PC-3 (cell line): ENCODE measurements at regions of chr20 and their contacts with region 1.

Region 1: DNA sequence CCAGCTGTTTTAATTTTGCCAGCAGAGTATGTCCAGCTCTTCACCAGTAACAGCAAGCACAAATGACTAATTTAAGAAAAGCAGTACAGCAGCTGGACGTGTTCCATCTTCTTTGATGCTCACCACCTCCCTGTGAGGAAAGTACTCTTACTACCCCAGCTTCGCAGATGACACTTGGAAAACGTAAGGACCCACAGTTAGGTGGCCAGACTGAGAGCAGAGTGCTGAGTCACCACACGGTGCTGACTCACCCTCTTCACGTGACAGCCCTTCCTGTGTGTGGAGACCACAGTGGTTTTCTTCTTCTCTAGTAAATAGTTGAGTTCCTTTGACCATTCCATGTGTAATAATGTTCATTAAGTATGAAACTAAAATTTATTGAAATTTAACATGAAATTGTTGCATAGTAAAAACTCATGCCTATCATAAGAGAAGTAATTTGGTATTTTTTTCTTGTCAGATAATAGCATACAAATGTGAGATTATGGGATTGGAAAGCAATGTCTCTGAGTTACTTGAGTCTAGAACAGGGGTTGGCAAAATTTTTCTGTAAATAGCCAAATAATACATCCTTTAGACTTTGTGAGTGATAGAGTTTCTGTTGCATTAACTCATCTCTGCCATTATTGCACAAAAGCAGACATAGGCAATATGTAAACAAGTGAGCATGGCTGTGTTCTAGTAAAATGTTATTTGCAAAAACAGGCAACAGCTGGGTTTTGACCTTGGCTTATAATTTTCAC is 76.6 kb downstream of the SLX4IP start:
- DNase-seq: peak; percentile 98
- ATAC-seq: peak; percentile 98
- H3K4me3 ChIP-seq: no peak overlapping the region
- H3K27ac ChIP-seq: peak overlapping the region; percentile 76
- H3K4me1 ChIP-seq: peaks cover 35% of the 10 kb centered on the region
- H3K27me3 ChIP-seq: no peaks in the 10 kb centered on the region
- CTCF ChIP-seq: no peak

Region 2: DNA sequence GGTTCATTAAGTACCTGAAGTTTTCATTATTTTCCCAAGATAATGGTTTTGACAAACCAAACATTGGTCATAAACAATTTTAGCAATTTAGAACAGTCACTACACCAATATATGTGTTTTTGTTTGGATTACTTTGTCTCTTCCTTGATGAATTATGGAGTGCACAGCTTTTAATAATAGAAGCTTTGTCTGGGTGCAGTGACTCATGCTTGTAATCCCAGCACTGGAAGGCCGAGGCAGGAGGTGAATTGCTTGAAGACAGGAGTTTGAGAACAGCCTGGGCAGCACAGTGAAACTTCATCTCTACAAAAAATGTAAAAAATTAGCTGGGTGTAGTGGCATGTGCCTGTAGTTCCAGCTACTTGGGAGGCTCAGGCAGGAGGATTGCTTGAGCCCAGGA is 566.3 kb before region 1 on chr20:
- CTCF ChIA-PET with region 1: no interaction called
- POLR2A ChIA-PET with region 1: no interaction called
- intact Hi-C with region 1: no loop called
- DNase-seq: peak; percentile 86
- ATAC-seq: peak; percentile 99
- H3K4me3 ChIP-seq: no peak overlapping the region
- H3K27ac ChIP-seq: peak overlapping the region; percentile 74
- H3K4me1 ChIP-seq: peaks cover 15% of the 10 kb centered on the region
- H3K27me3 ChIP-seq: no peaks in the 10 kb centered on the region
- CTCF ChIP-seq: no peak

Region 3: GRCh38 chr20:10469599-10469998 is 42.1 kb before region 1 on chr20:
- CTCF ChIA-PET with region 1: no interaction called
- POLR2A ChIA-PET with region 1: no interaction called
- intact Hi-C with region 1: loop called (anchors 5 kb)
- DNase-seq: peak; percentile 87
- ATAC-seq: peak; percentile 79
- H3K4me3 ChIP-seq: no peak overlapping the region
- H3K27ac ChIP-seq: peak overlapping the region; percentile 23
- H3K4me1 ChIP-seq: peaks cover 18% of the 10 kb centered on the region
- H3K27me3 ChIP-seq: no peaks in the 10 kb centered on the region
- CTCF ChIP-seq: peak; percentile 80

Region 4: GRCh38 chr20:10501402-10501801 is 10.3 kb before region 1 on chr20:
- CTCF ChIA-PET with region 1: no interaction called
- POLR2A ChIA-PET with region 1: interaction called, 13 read pairs
- intact Hi-C with region 1: no loop called
- DNase-seq: no peak
- ATAC-seq: no peak
- H3K4me3 ChIP-seq: no peak overlapping the region
- H3K27ac ChIP-seq: no peak overlapping the region
- H3K4me1 ChIP-seq: peaks cover 7% of the 10 kb centered on the region
- H3K27me3 ChIP-seq: no peaks in the 10 kb centered on the region
- CTCF ChIP-seq: no peak